Activated CD4-positive, alpha-beta T cell treated with anti-CD3 and anti-CD28 coated beads for 36 hours (primary cell): ENCODE measurements at regions of chr7 and their contacts with region 1.

Region 1: GRCh38 chr7:68058014-68058413 is 1061.4 kb downstream of the TYW1 start:
- DNase-seq: no peak
- ATAC-seq: no peak
- H3K4me3 Mint-ChIP-seq: no peak overlapping the region
- H3K27ac Mint-ChIP-seq: no peak overlapping the region
- H3K4me1 Mint-ChIP-seq: no peaks in the 10 kb centered on the region
- H3K27me3 Mint-ChIP-seq: no peaks in the 10 kb centered on the region

Region 2: DNA sequence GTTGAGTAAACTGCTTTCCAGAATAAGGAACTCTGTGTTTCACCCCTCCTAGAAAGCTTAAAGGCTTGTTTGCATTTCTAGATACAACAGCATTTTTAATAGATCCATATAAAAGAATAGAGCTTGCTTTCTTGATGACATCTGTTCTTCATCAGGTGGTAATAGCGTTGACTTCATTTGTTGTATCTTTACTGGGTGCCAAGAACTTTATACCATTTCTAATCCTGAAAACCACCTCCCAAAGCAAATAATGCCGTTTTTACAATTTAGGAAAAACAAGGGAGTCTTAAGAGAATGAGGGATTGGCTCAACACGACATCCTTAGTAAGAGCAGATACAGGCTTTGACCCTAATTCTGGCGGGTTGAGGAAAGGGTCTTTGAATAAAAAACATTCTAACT is 68.0 kb before region 1 on chr7:
- CTCF ChIA-PET with region 1: no interaction called
- POLR2A ChIA-PET with region 1: no interaction called
- intact Hi-C with region 1: loop called in 1 of 2 experiments (anchors 10 kb)
- DNase-seq: no peak
- ATAC-seq: no peak
- H3K4me3 Mint-ChIP-seq: no peak overlapping the region
- H3K27ac Mint-ChIP-seq: no peak overlapping the region
- H3K4me1 Mint-ChIP-seq: no peaks in the 10 kb centered on the region
- H3K27me3 Mint-ChIP-seq: no peaks in the 10 kb centered on the region

Region 3: GRCh38 chr7:68470836-68471435 is 412.9 kb after region 1 on chr7:
- CTCF ChIA-PET with region 1: no interaction called
- POLR2A ChIA-PET with region 1: no interaction called
- intact Hi-C with region 1: no loop called
- DNase-seq: no peak
- ATAC-seq: no peak
- H3K4me3 Mint-ChIP-seq: no peak overlapping the region
- H3K27ac Mint-ChIP-seq: no peak overlapping the region
- H3K4me1 Mint-ChIP-seq: no peaks in the 10 kb centered on the region
- H3K27me3 Mint-ChIP-seq: no peaks in the 10 kb centered on the region